ENCODE measurements at regions of chr20 and their contacts with region 1.

Region 1: GRCh38 chr20:14406495-14406894 is 69.1 kb upstream of the FLRT3 start:
- DNase-seq: peak; percentile 79
- H3K4me3 ChIP-seq: no peak overlapping the region
- H3K4me3 Mint-ChIP-seq: no peak overlapping the region
- H3K27ac Mint-ChIP-seq: peak overlapping the region; percentile 92
- H3K4me1 ChIP-seq: peaks cover 39% of the 10 kb centered on the region
- H3K4me1 Mint-ChIP-seq: peaks cover 36% of the 10 kb centered on the region
- H3K27me3 ChIP-seq: no peaks in the 10 kb centered on the region
- H3K27me3 Mint-ChIP-seq: no peaks in the 10 kb centered on the region
- CTCF ChIP-seq: no peak

Region 2: DNA sequence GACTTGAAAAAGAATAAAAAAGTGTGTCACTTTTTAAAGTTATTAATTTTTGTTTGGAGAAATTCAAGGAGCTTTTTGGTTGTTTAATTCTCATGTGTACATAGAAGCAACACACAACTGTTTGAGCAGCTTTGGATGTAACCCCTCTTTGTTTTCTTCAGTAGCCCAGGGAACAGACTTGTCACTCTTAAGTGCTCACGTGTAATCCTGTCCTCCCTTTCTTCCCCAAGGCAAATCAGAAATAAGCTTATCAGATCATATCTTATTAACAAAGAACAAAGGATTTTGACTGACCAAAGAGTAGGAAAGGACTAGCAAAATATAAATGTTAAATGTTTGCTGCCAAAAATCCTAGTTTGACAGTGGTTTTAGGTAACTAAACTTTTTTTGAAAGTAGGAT is 61.7 kb before region 1 on chr20:
- CTCF ChIA-PET with region 1: no interaction called
- POLR2A ChIA-PET with region 1: no interaction called
- intact Hi-C with region 1: loop called (anchors 1 kb)
- DNase-seq: peak in 1 of 2 experiments; percentile 59
- H3K4me3 ChIP-seq: no peak overlapping the region
- H3K4me3 Mint-ChIP-seq: no peak overlapping the region
- H3K27ac Mint-ChIP-seq: peak overlapping the region; percentile 66
- H3K4me1 ChIP-seq: peaks cover 63% of the 10 kb centered on the region
- H3K4me1 Mint-ChIP-seq: peaks cover 32% of the 10 kb centered on the region
- H3K27me3 ChIP-seq: no peaks in the 10 kb centered on the region
- H3K27me3 Mint-ChIP-seq: no peaks in the 10 kb centered on the region
- CTCF ChIP-seq: no peak

Region 3: GRCh38 chr20:14434379-14435136 is 28.1 kb after region 1 on chr20:
- CTCF ChIA-PET with region 1: interaction called, 3 read pairs
- POLR2A ChIA-PET with region 1: no interaction called
- intact Hi-C with region 1: loop called (anchors 2 kb)
- DNase-seq: no peak
- H3K4me3 ChIP-seq: no peak overlapping the region
- H3K4me3 Mint-ChIP-seq: no peak overlapping the region
- H3K27ac Mint-ChIP-seq: no peak overlapping the region
- H3K4me1 ChIP-seq: peaks cover 43% of the 10 kb centered on the region
- H3K4me1 Mint-ChIP-seq: peaks cover 21% of the 10 kb centered on the region
- H3K27me3 ChIP-seq: no peaks in the 10 kb centered on the region
- H3K27me3 Mint-ChIP-seq: no peaks in the 10 kb centered on the region
- CTCF ChIP-seq: no peak

Region 4: DNA sequence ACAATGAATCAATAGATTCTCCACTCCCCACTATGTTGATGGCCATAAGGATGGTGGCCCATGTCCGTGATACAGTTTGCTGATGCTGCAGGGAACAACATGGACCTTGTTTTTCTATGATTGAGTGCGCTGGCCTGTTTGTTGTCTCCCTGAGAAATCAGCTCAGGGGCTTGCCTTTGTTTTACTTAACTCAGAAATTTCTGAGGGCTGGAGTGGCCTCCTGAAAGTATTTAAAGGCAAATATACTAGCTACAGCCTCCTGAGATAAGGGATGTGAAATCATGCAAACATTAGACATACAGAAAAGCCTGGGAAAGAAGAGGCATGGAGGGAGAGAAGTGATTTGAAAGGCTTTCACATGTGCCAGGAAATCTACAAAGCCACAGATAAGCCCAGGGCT is 101.2 kb after region 1 on chr20:
- CTCF ChIA-PET with region 1: no interaction called
- POLR2A ChIA-PET with region 1: no interaction called
- intact Hi-C with region 1: loop called (anchors 1 kb)
- DNase-seq: peak; percentile 53 to 55
- H3K4me3 ChIP-seq: no peak overlapping the region
- H3K4me3 Mint-ChIP-seq: peak overlapping the region; percentile 27
- H3K27ac Mint-ChIP-seq: peak overlapping the region; percentile 62
- H3K4me1 ChIP-seq: peaks cover 16% of the 10 kb centered on the region
- H3K4me1 Mint-ChIP-seq: peaks cover 28% of the 10 kb centered on the region
- H3K27me3 ChIP-seq: no peaks in the 10 kb centered on the region
- H3K27me3 Mint-ChIP-seq: no peaks in the 10 kb centered on the region
- CTCF ChIP-seq: no peak

Region 5: DNA sequence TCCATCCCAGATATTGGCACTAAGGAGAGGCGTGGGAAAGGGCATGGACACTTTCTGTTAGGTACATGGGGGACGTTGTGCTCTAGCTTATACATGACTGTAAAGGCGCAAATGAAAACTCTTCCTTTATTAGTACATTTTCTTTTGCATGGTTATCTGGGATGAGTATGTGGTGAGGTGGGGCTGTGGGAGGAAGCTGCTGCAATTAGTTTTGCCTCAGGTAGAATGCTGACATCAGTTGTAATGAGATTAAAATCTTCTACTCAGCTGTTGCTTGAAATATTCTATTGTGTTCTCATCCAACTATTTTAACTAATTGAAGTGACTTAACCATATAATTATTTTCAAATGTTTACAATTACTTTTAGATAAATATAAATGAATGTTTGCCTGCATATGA is 149.2 kb after region 1 on chr20:
- CTCF ChIA-PET with region 1: no interaction called
- POLR2A ChIA-PET with region 1: no interaction called
- intact Hi-C with region 1: loop called (anchors 2 kb)
- DNase-seq: no peak
- H3K4me3 ChIP-seq: no peak overlapping the region
- H3K4me3 Mint-ChIP-seq: no peak overlapping the region
- H3K27ac Mint-ChIP-seq: peak overlapping the region; percentile 30
- H3K4me1 ChIP-seq: peaks cover 39% of the 10 kb centered on the region
- H3K4me1 Mint-ChIP-seq: peaks cover 19% of the 10 kb centered on the region
- H3K27me3 ChIP-seq: no peaks in the 10 kb centered on the region
- H3K27me3 Mint-ChIP-seq: no peaks in the 10 kb centered on the region
- CTCF ChIP-seq: no peak

Region 6: DNA sequence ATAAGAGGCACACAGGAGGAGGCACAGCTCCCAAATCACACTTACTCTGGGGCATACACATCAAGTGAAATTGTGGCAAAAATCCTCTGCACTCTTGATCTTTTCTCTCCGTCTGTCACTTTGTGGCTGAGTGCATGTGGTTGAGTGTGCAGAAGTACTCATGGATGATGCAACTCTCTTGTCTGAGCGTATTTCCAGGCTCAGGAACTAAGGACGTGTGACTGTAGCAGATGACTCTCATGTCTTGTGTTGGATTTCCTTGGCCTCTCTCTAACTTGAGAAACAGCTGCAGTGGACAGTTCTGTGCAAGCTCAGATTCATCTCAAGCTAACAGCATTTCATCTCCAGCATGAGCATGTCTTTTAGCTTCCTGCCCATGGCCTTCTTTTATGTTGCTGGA is 176.4 kb after region 1 on chr20:
- CTCF ChIA-PET with region 1: no interaction called
- POLR2A ChIA-PET with region 1: no interaction called
- intact Hi-C with region 1: no loop called
- DNase-seq: no peak
- H3K4me3 ChIP-seq: no peak overlapping the region
- H3K4me3 Mint-ChIP-seq: no peak overlapping the region
- H3K27ac Mint-ChIP-seq: no peak overlapping the region
- H3K4me1 ChIP-seq: peaks cover 8% of the 10 kb centered on the region; the same call in 1 of the 2 replicates
- H3K4me1 Mint-ChIP-seq: no peaks in the 10 kb centered on the region
- H3K27me3 ChIP-seq: no peaks in the 10 kb centered on the region
- H3K27me3 Mint-ChIP-seq: no peaks in the 10 kb centered on the region
- CTCF ChIP-seq: no peak

Region 7: GRCh38 chr20:14672066-14672465 is 265.6 kb after region 1 on chr20:
- CTCF ChIA-PET with region 1: no interaction called
- POLR2A ChIA-PET with region 1: no interaction called
- intact Hi-C with region 1: loop called (anchors 5 kb)
- DNase-seq: no peak
- H3K4me3 ChIP-seq: no peak overlapping the region
- H3K4me3 Mint-ChIP-seq: no peak overlapping the region
- H3K27ac Mint-ChIP-seq: no peak overlapping the region
- H3K4me1 ChIP-seq: peaks cover 36% of the 10 kb centered on the region
- H3K4me1 Mint-ChIP-seq: peaks cover 10% of the 10 kb centered on the region
- H3K27me3 ChIP-seq: no peaks in the 10 kb centered on the region
- H3K27me3 Mint-ChIP-seq: no peaks in the 10 kb centered on the region
- CTCF ChIP-seq: no peak

Region 8: DNA sequence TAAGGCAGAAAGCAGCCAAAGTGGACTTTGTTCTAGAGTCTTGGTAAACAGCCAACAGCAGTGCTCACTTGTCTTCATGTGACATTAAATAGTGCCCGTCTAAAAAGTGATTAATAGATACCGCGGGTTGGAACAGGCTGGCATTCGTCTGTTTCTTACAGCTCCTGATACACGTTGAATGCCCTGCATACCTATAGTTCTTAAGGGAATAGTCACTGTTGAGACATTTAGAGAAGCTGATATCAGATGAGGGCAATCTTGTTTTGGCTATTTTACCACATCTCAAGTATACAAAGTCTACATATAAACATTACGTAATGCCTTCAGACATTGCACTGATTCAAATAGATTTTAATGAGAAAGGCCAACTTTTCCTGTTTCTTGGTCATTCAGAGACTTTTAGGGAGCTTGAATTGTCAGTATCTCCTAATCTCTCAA is 305.8 kb after region 1 on chr20:
- CTCF ChIA-PET with region 1: no interaction called
- POLR2A ChIA-PET with region 1: interaction called, 3 read pairs
- intact Hi-C with region 1: loop called (anchors 1 kb)
- DNase-seq: peak; percentile 57 to 65
- H3K4me3 ChIP-seq: no peak overlapping the region
- H3K4me3 Mint-ChIP-seq: no peak overlapping the region
- H3K27ac Mint-ChIP-seq: peak overlapping the region; percentile 45
- H3K4me1 ChIP-seq: peaks cover 57% of the 10 kb centered on the region
- H3K4me1 Mint-ChIP-seq: peaks cover 45% of the 10 kb centered on the region
- H3K27me3 ChIP-seq: no peaks in the 10 kb centered on the region
- H3K27me3 Mint-ChIP-seq: no peaks in the 10 kb centered on the region
- CTCF ChIP-seq: no peak

Measured in Caco-2 (cell line).